Natural killer cell (primary cell): ENCODE measurements at regions of chr7 and their contacts with region 1.

Region 1: GRCh38 chr7:3117488-3118231 is 74.0 kb upstream of the CARD11 start:
- DNase-seq: no peak
- ATAC-seq: peak in 2 of 3 donors; percentile 34 to 64
- H3K4me3 ChIP-seq: peak overlapping the region; percentile 54
- H3K4me3 Mint-ChIP-seq: peak overlapping the region; percentile 99
- H3K27ac ChIP-seq: peak overlapping the region; percentile 44
- H3K27ac Mint-ChIP-seq: peak overlapping the region; percentile 95
- H3K4me1 ChIP-seq: peaks cover 71% of the 10 kb centered on the region
- H3K4me1 Mint-ChIP-seq: peaks cover 80 to 83% of the 10 kb centered on the region in 2 donors
- H3K27me3 ChIP-seq: no peaks in the 10 kb centered on the region
- H3K27me3 Mint-ChIP-seq: no peaks in the 10 kb centered on the region
- CTCF ChIP-seq: no peak

Region 2: GRCh38 chr7:2903682-2904162 is 213.9 kb before region 1 on chr7:
- intact Hi-C with region 1: loop called (anchors 5 kb)
- DNase-seq: peak in 1 of 2 donors; percentile 22
- ATAC-seq: peak; percentile 25 to 38 (median 27)
- H3K4me3 ChIP-seq: no peak overlapping the region
- H3K4me3 Mint-ChIP-seq: peak overlapping the region; percentile 47
- H3K27ac ChIP-seq: peak overlapping the region; percentile 59
- H3K27ac Mint-ChIP-seq: peak overlapping the region; percentile 83 to 88
- H3K4me1 ChIP-seq: peaks cover 37% of the 10 kb centered on the region
- H3K4me1 Mint-ChIP-seq: peaks cover 35 to 52% of the 10 kb centered on the region in 2 donors
- H3K27me3 ChIP-seq: no peaks in the 10 kb centered on the region
- H3K27me3 Mint-ChIP-seq: no peaks in the 10 kb centered on the region
- CTCF ChIP-seq: no peak